Lower lobe of right lung (tissue), 2 donors: ENCODE measurements at regions of chr9 and their contacts with region 1.

Region 1: DNA sequence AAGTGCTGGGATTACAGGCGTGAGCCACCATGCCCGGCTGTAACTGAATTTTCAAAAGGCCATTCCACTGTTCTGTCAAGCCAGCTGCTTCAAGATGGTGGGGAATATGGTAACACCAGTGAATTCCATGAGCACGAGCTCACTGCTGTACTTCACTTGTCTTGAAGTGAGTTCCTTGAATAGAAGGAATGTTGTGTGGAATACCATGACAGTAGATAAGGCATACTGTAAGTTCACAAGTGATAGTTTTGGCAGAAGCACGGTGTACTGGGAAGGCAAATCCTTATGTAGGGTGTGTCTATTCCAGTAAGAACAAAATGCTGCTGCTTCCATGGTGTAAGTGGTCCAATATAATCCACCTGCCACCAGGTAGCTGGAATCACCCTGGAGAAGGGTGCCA is 6.6 kb upstream of the PRXL2C start:
- DNase-seq: no peak
- ATAC-seq: peak; percentile 76 to 88
- H3K4me3 ChIP-seq: no peak overlapping the region
- H3K27ac ChIP-seq: no peak overlapping the region
- H3K4me1 ChIP-seq: peaks cover 3% of the 10 kb centered on the region
- H3K27me3 ChIP-seq: no peaks in the 10 kb centered on the region
- CTCF ChIP-seq: no peak

Region 2: GRCh38 chr9:96266282-96267210 is 395.2 kb before region 1 on chr9:
- intact Hi-C with region 1: no loop called
- DNase-seq: no peak
- ATAC-seq: peak in 1 of 2 donors; percentile 71
- H3K4me3 ChIP-seq: no peak overlapping the region
- H3K27ac ChIP-seq: no peak overlapping the region
- H3K4me1 ChIP-seq: no peaks in the 10 kb centered on the region
- H3K27me3 ChIP-seq: no peaks in the 10 kb centered on the region
- CTCF ChIP-seq: no peak

Region 3: DNA sequence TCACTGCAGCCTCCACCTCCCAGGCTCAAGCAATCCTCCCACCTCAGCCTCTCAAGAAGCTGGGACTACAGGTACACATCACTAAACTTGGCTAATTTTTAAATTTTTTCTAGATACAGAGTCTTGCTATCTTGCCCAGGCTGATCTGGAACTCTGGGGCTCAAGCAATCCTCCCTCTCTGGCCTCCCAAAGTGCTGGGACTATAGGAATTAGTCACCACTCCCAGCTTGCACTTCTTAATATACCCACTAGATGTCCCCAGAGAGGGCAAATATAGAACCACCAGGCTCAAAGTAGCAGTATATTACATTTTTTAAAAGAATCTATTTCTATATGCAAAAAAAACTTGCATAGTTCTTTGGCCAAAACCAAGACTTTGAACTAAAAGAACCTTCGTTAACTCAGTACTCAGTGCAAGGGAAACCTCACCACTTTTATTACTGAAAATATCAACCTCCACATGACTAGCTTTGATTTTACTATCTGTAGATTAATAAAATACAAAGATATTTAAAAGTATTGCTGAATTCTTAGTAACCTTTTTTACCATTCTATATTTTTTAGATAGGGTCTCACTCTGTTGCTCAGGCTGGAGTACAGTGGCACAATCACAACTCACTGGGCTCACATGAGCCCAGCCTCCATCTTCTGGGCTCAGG is 333.9 kb before region 1 on chr9:
- intact Hi-C with region 1: loop called (anchors 10 kb)
- DNase-seq: no peak
- ATAC-seq: peak; percentile 78 to 89
- H3K4me3 ChIP-seq: no peak overlapping the region
- H3K27ac ChIP-seq: no peak overlapping the region
- H3K4me1 ChIP-seq: no peaks in the 10 kb centered on the region
- H3K27me3 ChIP-seq: no peaks in the 10 kb centered on the region
- CTCF ChIP-seq: peak; percentile 88

Region 4: GRCh38 chr9:96449845-96450612 is 211.7 kb before region 1 on chr9 and contains the start of gene HABP4:
- intact Hi-C with region 1: no loop called
- DNase-seq: peak; percentile 98
- ATAC-seq: peak; percentile 98 to 99
- H3K4me3 ChIP-seq: peak within 1 kb of the TSS; percentile 77
- H3K27ac ChIP-seq: peak within 1 kb of the TSS; percentile 68
- H3K4me1 ChIP-seq: peaks cover 13% of the 10 kb centered on the region
- H3K27me3 ChIP-seq: no peaks in the 10 kb centered on the region
- CTCF ChIP-seq: no peak
- total RNA-seq, gene HABP4: 9.8 TPM